Mammary epithelial cell (primary cell): ENCODE measurements at regions of chr1 and their contacts with region 1.

Region 1: GRCh38 chr1:68120136-68120791 is 69.8 kb upstream of the DIRAS3 start:
- DNase-seq: peak; percentile 64
- H3K4me3 ChIP-seq: no peak overlapping the region
- H3K27ac ChIP-seq: no peak overlapping the region
- H3K4me1 ChIP-seq: no peaks in the 10 kb centered on the region
- H3K27me3 ChIP-seq: no peaks in the 10 kb centered on the region
- CTCF ChIP-seq: peak; percentile 76 to 78

Region 2: DNA sequence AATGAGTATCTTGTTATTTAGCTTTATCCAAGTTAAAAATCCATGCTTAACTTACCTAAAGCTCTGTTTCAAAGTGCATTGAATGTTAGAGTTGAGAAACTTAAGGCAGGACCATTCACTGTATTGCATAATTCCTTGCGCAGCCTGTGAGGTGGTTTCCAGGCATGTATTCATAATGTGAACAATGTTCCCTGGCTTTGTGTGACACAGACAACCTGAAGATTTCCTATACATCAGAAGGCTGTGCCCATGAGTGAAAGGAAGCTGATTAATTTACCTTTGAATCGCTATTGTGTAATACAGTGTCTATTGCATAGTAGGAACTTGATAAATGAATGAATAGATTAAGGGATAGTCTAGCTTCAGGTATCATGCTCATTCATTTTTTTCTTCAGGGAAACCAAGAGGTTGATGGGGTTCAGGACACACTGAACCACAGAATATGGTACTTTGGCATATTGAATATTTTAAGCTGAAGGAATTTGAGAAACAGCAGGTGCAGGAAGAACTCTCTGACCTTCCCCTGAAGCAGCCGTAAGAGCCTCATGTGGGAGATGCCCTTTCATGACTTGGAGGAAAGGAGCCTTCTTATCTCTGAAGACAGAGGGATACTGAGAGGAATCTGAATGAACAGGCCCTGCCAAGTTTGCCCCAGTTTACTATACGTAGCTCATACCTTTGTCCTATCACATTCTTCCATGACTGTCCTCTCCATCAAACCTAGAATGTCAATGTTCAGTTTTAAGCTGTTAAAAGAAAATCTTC is 198.4 kb before region 1 on chr1:
- CTCF ChIA-PET with region 1: no interaction called
- dilution Hi-C with region 1: no loop called
- in situ Hi-C with region 1: no loop called
- intact Hi-C with region 1: no loop called
- DNase-seq: peak; percentile 95
- H3K4me3 ChIP-seq: no peak overlapping the region
- H3K27ac ChIP-seq: peak overlapping the region; percentile 26
- H3K4me1 ChIP-seq: peaks cover 14% of the 10 kb centered on the region
- H3K27me3 ChIP-seq: no peaks in the 10 kb centered on the region
- CTCF ChIP-seq: no peak

Region 3: GRCh38 chr1:68442822-68443556 is 322.7 kb after region 1 on chr1:
- CTCF ChIA-PET with region 1: no interaction called
- dilution Hi-C with region 1: no loop called
- in situ Hi-C with region 1: loop called in 1 of 2 experiments (anchors 10 kb)
- intact Hi-C with region 1: loop called (anchors 1 kb)
- DNase-seq: peak; percentile 81
- H3K4me3 ChIP-seq: no peak overlapping the region
- H3K27ac ChIP-seq: no peak overlapping the region
- H3K4me1 ChIP-seq: peaks cover 8% of the 10 kb centered on the region
- H3K27me3 ChIP-seq: no peaks in the 10 kb centered on the region
- CTCF ChIP-seq: peak; percentile 73 to 76